ENCODE measurements at regions of chr4 and their contacts with region 1.

Region 1: GRCh38 chr4:141169391-141169790 is 36.1 kb upstream of the RNF150 start:
- DNase-seq: no peak
- H3K4me3 ChIP-seq: no peak overlapping the region
- H3K27ac ChIP-seq: no peak overlapping the region
- H3K4me1 ChIP-seq: no peaks in the 10 kb centered on the region
- H3K27me3 ChIP-seq: peaks cover 5% of the 10 kb centered on the region
- CTCF ChIP-seq: no peak

Region 2: GRCh38 chr4:140595065-140595464 is 574.3 kb before region 1 on chr4:
- CTCF ChIA-PET with region 1: no interaction called
- dilution Hi-C with region 1: no loop called
- in situ Hi-C with region 1: no loop called
- intact Hi-C with region 1: no loop called
- DNase-seq: peak; percentile 53
- H3K4me3 ChIP-seq: no peak overlapping the region
- H3K27ac ChIP-seq: no peak overlapping the region
- H3K4me1 ChIP-seq: no peaks in the 10 kb centered on the region
- H3K27me3 ChIP-seq: peaks cover 2% of the 10 kb centered on the region
- CTCF ChIP-seq: peak; percentile 67 to 81

Region 3: DNA sequence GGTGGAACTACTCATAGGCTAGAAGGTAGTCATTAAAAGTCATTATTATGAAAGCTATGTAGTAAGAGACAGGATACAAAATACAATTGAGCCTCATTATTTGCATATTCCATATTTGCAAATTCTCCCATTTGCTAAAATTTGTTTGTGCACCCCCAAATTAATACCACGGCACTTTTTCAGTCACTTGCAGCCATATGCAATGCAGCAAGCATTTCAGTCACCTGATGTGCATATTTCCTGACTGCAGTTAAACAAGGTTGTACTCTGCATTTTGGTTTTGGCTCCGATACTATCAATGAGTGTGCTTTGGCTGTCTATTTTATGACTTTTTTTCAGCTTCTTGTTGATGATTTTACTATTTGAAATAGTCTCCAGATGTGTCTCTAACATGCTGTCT is 114.2 kb after region 1 on chr4:
- CTCF ChIA-PET with region 1: no interaction called
- dilution Hi-C with region 1: no loop called
- in situ Hi-C with region 1: no loop called
- intact Hi-C with region 1: loop called (anchors 10 kb)
- DNase-seq: no peak
- H3K4me3 ChIP-seq: no peak overlapping the region
- H3K27ac ChIP-seq: no peak overlapping the region
- H3K4me1 ChIP-seq: no peaks in the 10 kb centered on the region
- H3K27me3 ChIP-seq: peaks cover 5% of the 10 kb centered on the region
- CTCF ChIP-seq: no peak

Region 4: DNA sequence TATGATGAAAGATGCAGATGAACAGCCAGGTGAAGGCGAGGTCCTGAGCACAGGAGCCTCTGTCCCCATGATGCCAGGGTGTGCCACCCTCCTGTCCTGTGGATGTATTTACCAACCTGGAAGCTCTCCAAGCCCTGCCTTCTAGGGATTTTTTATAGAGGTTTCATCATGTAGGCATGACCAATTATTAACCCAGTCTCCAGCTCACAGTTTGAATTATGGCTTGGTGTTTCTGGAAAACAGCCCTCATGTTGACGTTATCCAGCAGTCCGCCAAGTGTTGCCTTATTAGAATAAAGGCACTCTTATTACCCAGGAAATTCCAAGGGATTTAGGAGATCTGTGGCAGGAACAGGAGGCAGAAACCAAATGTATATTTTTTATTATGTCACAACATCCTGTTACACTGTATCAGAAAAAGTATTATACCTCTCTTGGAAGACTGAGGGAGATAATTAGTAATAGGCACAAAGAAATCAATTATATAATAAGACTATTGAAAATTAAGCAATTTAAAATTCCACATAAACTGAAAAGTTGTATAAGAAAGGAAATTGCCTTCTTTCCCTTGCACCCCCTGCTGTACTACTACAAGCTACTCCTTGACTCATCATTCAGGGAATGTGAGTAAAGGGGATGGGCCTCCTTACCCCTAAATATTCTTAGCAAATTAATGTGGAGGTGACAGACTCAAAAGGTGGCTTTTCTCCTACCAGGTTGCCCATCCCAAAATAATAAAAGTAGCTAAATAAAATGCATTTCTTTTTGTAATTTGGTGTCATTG is 180.9 kb after region 1 on chr4:
- CTCF ChIA-PET with region 1: no interaction called
- dilution Hi-C with region 1: no loop called
- in situ Hi-C with region 1: no loop called
- intact Hi-C with region 1: no loop called
- DNase-seq: peak; percentile 82
- H3K4me3 ChIP-seq: no peak overlapping the region
- H3K27ac ChIP-seq: no peak overlapping the region
- H3K4me1 ChIP-seq: peaks cover 22% of the 10 kb centered on the region
- H3K27me3 ChIP-seq: no peaks in the 10 kb centered on the region
- CTCF ChIP-seq: no peak